RWPE1 (cell line): ENCODE measurements at regions of chr5 and their contacts with region 1.

Region 1: DNA sequence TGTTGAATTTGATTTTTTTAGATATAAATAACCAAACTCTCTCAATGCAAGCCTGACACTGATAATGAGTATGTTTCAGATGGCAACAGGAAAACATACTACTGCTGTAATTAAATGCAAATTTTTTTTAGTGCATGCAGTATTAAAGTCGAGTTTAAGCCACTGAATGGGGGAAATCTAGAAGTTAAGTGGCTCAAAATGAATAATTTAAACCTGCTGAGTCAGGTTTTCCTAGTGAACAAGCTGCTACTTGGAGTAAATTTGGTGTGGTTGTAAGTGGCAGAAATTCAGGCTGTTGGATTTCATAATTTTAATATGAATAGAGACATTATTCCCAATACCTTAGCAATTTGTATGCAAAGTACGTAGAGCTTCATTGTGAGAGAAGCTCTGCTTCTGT is 121.8 kb downstream of the SLF1 start:
- DNase-seq: no peak
- H3K27ac ChIP-seq: no peak overlapping the region
- CTCF ChIP-seq: no peak

Region 2: DNA sequence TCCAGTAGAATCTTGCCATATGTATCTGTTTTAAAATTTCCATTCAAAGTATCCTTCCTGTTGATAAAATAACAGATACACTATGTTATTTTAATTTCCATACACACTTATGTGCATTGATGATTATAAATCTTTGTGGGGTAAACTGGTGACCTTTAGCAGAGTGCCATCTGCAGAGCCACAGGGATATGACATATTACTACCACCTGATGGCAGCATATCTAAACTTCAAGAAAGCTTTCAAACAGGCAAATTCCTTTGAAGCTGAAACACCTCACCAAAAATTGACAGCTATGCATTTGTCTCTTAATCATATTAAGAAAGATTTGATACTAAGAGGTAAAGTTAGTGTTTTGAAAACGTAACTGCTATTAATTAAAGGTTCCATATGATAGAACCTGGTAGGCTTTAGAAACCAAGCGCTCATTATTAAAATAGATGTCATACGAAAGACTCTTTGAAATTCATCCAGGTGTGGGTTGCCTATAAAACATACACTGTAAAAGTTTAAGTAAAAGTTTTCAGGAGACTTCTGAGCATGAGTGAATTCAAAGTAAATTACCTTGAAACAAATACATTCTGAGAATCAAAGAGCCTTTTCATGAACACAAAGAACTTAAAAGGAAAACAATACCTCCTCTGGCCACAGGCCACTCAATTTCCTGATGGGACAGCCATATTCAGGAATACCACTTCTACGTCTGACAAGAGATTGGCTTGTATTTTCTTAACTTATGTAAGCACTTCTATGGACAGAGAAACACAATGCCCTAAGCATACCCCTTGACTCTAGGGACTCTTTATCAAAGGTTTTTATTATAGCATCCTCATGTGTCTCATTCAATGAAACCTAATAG is 215.2 kb before region 1 on chr5:
- CTCF ChIA-PET with region 1: interaction called, 21 read pairs
- POLR2A ChIA-PET with region 1: no interaction called
- DNase-seq: peak; percentile 52
- H3K27ac ChIP-seq: no peak overlapping the region
- CTCF ChIP-seq: peak; percentile 87